OCI-LY7 (cell line): ENCODE measurements at regions of chr2 and their contacts with region 1.

Region 1: DNA sequence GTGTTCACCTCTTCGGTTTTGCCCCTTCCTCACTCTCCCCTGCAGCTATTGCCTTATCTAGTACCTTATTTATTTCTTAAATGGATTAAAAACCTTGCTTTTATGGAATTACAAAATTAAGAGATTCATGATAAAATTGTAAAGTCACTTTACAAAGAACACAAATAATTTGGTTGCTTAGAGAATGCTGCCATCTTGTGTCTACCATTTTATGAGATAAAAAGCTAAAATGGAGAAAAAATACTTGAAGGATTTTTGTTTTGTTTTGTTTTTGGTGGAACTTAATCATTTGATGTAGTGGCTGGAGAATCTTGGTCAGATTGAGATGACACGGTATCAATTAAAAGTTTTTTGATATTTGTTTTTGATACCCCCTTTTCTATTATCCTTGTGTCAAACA is 69.6 kb downstream of the R3HDM1 start:
- DNase-seq: peak; percentile 12
- H3K4me3 ChIP-seq: no peak overlapping the region
- H3K27ac ChIP-seq: no peak overlapping the region
- H3K4me1 ChIP-seq: no peaks in the 10 kb centered on the region
- CTCF ChIP-seq: peak; percentile 54

Region 2: GRCh38 chr2:135422898-135423297 is 178.0 kb before region 1 on chr2:
- CTCF ChIA-PET with region 1: no interaction called
- POLR2A ChIA-PET with region 1: no interaction called
- intact Hi-C with region 1: no loop called
- DNase-seq: no peak
- H3K4me3 ChIP-seq: no peak overlapping the region
- H3K27ac ChIP-seq: no peak overlapping the region
- H3K4me1 ChIP-seq: no peaks in the 10 kb centered on the region
- CTCF ChIP-seq: no peak

Region 3: DNA sequence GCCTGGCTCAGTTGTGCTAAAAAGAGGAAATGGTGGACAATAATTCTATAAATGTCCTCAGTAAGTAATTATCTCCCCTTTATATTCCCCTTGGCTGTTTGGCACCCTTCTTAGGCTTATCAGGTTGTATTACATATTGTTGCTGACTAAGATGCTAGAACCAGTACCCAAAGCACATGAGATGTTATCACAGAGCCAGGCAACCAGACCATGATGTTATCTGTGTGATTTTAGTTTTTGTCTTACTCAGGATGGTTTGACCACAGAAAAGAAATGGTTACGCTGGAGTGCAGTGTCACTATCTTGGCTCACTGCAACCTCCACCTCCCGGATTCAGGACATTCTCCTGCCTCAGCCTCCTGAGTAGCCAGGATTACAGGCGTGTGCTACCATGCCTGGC is 54.5 kb before region 1 on chr2:
- CTCF ChIA-PET with region 1: no interaction called
- POLR2A ChIA-PET with region 1: interaction called, 10 read pairs
- intact Hi-C with region 1: no loop called
- DNase-seq: no peak
- H3K4me3 ChIP-seq: no peak overlapping the region
- H3K27ac ChIP-seq: no peak overlapping the region
- H3K4me1 ChIP-seq: no peaks in the 10 kb centered on the region
- CTCF ChIP-seq: no peak

Region 4: DNA sequence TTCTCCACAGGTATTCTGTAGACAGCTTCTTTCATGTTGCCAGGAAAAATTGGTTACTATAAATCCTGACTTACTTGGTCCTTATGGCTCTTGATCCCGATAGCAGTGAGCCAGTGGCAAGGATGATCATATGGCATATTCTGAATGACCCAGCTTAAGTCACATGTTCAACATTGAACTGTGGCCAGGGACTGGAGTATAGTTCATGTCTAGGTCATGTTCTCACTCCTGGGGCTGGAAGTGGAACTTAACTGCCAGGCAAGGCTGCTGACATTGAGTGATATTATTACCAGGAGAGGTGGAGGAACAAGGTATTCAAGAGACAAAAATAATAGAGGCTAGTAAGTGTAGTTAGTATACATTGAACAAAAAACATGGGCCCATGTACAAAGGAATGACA is 43.4 kb before region 1 on chr2:
- CTCF ChIA-PET with region 1: no interaction called
- POLR2A ChIA-PET with region 1: no interaction called
- intact Hi-C with region 1: no loop called
- DNase-seq: no peak
- H3K4me3 ChIP-seq: no peak overlapping the region
- H3K27ac ChIP-seq: no peak overlapping the region
- H3K4me1 ChIP-seq: no peaks in the 10 kb centered on the region
- CTCF ChIP-seq: no peak

Region 5: DNA sequence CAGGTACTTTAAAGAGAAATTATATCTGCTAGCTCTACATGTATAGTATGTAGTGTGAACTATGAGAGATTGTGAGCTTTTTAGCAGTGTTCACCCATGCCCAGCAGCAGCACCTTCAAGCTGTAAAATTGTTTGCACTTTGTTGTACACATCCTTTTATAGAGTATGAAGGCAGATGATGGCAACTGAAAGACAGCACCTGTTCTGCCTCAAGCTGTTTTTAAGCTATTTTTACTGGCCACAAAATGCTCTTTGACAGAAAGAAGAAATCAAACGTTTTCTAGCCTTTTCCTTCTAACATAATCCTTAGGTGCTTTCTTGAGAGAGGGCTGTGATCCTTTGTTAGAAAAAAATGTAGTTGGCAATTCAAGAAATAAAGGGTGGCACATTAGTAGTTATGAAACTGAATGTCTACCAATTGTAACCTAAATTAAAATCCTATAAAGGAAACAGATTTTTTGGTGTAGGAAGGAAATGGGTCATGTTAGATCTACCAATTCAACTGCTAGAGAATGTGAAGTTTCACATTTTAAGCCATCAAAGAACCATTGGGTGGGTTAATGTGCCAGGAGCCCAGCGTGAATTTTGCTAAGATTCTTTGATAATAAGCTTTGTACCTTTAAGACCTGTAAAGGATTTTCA is 10.2 kb before region 1 on chr2:
- CTCF ChIA-PET with region 1: no interaction called
- POLR2A ChIA-PET with region 1: interaction called, 16 read pairs
- intact Hi-C with region 1: no loop called
- DNase-seq: peak; percentile 69
- H3K4me3 ChIP-seq: no peak overlapping the region
- H3K27ac ChIP-seq: peak overlapping the region; percentile 82
- H3K4me1 ChIP-seq: peaks cover 52% of the 10 kb centered on the region
- CTCF ChIP-seq: no peak

Region 6: GRCh38 chr2:135676031-135676430 is 75.1 kb after region 1 on chr2:
- CTCF ChIA-PET with region 1: no interaction called
- POLR2A ChIA-PET with region 1: no interaction called
- intact Hi-C with region 1: no loop called
- DNase-seq: no peak
- H3K4me3 ChIP-seq: no peak overlapping the region
- H3K27ac ChIP-seq: no peak overlapping the region
- H3K4me1 ChIP-seq: no peaks in the 10 kb centered on the region
- CTCF ChIP-seq: no peak